Activated CD4-positive, alpha-beta T cell treated with anti-CD3 and anti-CD28 coated beads, Interleukin-2, amount 10 ng/mL, durations not matched to agents 24 days and 14 days (primary cell): ENCODE measurements at regions of chr20 and their contacts with region 1.

Region 1: GRCh38 chr20:9978397-9979004 is 56.3 kb upstream of the ANKEF1 start:
- DNase-seq: peak; percentile 84
- H3K4me3 Mint-ChIP-seq: no peak overlapping the region
- H3K27ac Mint-ChIP-seq: no peak overlapping the region
- H3K4me1 Mint-ChIP-seq: peaks cover 5% of the 10 kb centered on the region
- H3K27me3 Mint-ChIP-seq: peaks cover 5% of the 10 kb centered on the region

Region 2: DNA sequence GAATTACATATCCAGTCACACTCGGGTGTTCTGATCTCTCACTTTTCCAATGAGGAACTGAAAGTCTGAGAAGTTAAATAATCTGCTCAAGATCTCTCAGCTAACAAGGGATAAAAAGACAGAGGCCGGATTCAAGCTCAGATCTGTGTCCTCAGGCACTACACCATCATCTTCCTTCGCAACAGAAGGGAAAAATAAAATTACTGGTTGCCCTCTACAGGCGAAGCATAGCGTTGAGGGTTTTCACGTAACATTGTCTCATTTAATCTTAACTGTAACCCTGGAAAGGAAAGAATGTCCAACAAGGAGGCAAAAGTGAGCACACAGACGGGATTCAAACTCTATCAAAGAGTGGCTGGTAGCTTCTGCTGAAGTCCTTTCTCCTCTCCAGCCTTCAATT is 11.5 kb before region 1 on chr20:
- intact Hi-C with region 1: no loop called
- DNase-seq: no peak
- H3K4me3 Mint-ChIP-seq: no peak overlapping the region
- H3K27ac Mint-ChIP-seq: no peak overlapping the region
- H3K4me1 Mint-ChIP-seq: no peaks in the 10 kb centered on the region
- H3K27me3 Mint-ChIP-seq: peaks cover 6% of the 10 kb centered on the region

Region 3: DNA sequence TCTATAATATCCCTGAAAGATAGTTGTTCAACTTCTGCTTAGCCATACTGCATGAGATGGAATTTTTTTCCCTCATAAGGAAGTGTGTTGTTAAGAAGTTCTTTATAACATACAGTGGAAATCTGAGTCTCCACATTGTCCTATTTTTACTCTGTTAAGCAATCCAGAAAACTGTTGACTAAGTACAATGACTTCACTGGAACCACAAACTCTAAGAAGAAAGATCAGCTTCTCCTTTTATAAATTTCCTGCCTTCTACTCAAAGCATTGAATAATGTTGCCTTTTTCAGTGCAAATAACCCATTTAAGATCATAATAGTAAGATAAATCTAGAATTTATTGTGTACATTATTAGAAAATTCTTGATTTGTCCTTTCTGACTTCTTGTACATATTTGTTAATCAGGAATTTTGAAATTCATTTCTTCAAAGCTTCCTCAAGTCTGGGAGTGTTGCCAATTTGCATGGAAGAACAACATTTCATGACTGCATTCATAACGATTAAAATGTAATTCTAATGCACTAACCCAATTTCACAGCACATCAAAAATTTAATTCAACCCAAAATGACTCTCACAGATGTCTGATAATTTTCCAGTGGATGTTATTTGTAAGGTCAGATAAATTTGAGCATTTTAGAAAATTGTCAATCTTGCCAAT is 10.7 kb after region 1 on chr20:
- intact Hi-C with region 1: no loop called
- DNase-seq: no peak
- H3K4me3 Mint-ChIP-seq: no peak overlapping the region
- H3K27ac Mint-ChIP-seq: no peak overlapping the region
- H3K4me1 Mint-ChIP-seq: no peaks in the 10 kb centered on the region
- H3K27me3 Mint-ChIP-seq: peaks cover 3% of the 10 kb centered on the region

Region 4: DNA sequence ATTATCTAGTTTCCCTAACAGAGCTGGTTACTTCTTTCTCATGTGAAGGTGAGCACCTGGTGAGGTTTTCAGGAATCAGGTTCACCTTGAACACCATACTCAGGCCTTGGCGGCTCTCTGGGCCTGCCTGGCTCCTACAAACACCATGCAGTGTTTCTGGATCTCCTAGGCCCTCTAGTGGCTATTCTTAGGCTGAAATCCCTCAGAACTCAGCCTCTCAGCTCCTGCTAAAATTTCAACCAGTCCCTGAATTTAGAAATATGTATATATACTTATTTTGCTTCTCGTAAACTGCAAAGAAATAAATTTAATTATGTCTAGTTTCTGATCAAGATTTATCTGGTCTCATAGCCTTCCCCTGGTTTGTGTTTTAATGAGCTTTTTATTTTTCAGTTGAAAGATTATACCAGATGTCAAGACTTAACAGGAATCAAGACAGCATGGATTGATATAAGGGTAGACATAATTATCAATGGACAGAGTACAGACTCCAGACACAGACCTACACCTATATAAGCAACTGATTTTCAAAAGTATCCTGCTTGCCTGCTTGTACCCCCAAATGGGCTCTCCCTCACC is 112.2 kb after region 1 on chr20:
- intact Hi-C with region 1: loop called (anchors 1 kb)
- DNase-seq: peak; percentile 67
- H3K4me3 Mint-ChIP-seq: no peak overlapping the region
- H3K27ac Mint-ChIP-seq: no peak overlapping the region
- H3K4me1 Mint-ChIP-seq: no peaks in the 10 kb centered on the region
- H3K27me3 Mint-ChIP-seq: no peaks in the 10 kb centered on the region

Region 5: GRCh38 chr20:10219452-10219791 is 240.9 kb after region 1 on chr20:
- intact Hi-C with region 1: loop called (anchors 2 kb)
- DNase-seq: peak; percentile 93
- H3K4me3 Mint-ChIP-seq: peak overlapping the region; percentile 66
- H3K27ac Mint-ChIP-seq: peak overlapping the region; percentile 40
- H3K4me1 Mint-ChIP-seq: peaks cover 15% of the 10 kb centered on the region
- H3K27me3 Mint-ChIP-seq: peaks cover 22% of the 10 kb centered on the region

Region 6: DNA sequence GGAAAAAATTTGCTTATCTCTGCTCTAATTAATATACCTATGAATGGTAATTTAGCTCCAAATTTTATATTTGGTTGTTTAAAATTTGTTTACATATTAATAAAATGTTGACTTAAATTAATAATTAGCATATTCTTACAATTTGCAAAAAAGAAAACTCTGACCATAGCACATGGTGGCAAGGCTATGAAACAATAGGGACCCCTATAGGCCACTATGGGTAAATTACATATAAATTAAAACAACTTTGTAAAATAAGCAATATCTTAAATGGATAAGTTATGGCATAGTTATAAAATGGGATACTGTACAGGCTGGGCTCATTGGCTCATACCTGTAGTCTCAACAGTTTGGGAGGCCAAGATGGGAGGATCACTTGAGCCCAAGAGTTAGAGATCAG is 379.5 kb after region 1 on chr20:
- intact Hi-C with region 1: loop called (anchors 10 kb)
- DNase-seq: no peak
- H3K4me3 Mint-ChIP-seq: no peak overlapping the region
- H3K27ac Mint-ChIP-seq: no peak overlapping the region
- H3K4me1 Mint-ChIP-seq: peaks cover 4% of the 10 kb centered on the region
- H3K27me3 Mint-ChIP-seq: peaks cover 8% of the 10 kb centered on the region

Region 7: GRCh38 chr20:10427060-10427692 is 448.7 kb after region 1 on chr20:
- intact Hi-C with region 1: loop called (anchors 1 kb)
- DNase-seq: peak; percentile 79
- H3K4me3 Mint-ChIP-seq: no peak overlapping the region
- H3K27ac Mint-ChIP-seq: no peak overlapping the region
- H3K4me1 Mint-ChIP-seq: peaks cover 21% of the 10 kb centered on the region
- H3K27me3 Mint-ChIP-seq: no peaks in the 10 kb centered on the region

Region 8: DNA sequence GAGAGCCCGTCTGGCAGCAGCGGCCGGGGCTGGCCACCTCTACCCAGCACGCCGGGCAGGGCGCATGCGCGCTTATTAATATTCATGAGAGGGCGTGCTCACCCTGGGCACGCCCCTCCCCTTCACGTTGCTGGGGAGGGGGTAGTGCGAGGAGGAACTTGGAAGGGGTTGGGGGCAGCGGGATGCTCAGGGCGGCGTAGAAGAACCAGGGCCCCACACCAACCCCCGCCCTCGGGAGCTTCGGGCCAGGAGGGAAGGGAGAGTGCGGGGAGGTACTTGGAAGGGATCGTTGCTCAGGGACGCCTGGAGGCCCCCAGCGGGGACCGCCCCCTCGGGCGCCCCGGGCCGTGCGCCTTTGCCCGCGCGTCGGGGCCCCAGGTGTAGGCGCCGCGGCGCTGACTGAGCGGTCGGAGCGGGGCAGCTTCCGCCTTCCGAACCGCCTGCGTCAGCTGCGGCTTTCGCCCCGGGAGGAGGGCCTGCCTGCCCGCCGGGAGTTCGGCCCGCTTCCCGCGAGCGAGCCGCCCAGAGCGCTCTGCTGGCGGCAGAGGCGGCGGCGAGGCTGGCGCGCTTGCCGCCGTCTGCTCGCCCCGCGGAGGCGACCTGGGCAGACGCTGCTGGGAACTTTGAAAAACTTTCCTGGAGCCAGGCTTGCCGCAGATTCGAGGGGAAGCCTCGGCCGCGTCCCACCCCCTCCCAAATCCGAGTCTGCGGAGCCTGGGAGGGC is 695.6 kb after region 1 on chr20 and contains the start of gene JAG1:
- intact Hi-C with region 1: loop called (anchors 10 kb)
- DNase-seq: peak; percentile 93
- H3K4me3 Mint-ChIP-seq: peak within 1 kb of the TSS; percentile 93
- H3K27ac Mint-ChIP-seq: peak within 1 kb of the TSS; percentile 88
- H3K4me1 Mint-ChIP-seq: peaks cover 30% of the 10 kb centered on the region
- H3K27me3 Mint-ChIP-seq: peaks cover 67% of the 10 kb centered on the region
- total RNA-seq, gene JAG1: 1.1 and 1.3 TPM in 2 replicates

Region 9: DNA sequence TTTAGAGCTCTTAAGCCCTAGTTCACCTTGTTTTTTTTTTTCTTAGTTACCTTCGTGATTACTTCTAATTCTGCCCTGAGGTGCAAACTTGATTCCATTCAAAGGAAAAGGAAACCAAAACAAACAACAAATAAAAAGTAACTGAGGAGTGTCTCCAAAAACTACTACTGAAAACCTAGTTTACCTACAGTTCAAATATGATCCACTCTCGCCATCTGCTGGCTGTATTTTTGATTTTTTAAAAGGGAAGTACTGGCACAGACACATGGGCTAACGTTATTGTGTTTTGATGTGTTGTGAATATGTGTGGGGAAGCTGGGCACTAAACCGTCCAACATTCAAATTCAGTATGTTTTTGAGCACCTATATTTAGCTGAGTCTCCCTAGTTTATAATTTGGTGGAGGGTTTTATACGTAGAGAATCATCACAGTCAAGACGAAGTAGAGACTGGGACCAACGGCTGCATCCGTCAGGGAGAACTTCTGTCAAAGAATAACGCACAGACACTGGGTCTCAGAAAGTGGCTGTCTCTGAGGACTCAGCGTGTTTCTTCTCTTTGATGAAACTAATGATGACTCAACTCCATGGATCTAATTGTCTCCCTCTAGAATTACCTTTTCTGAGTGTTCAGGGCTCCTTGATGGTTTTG is 1565.7 kb after region 1 on chr20:
- intact Hi-C with region 1: loop called (anchors 1 kb)
- DNase-seq: peak; percentile 76
- H3K4me3 Mint-ChIP-seq: no peak overlapping the region
- H3K27ac Mint-ChIP-seq: no peak overlapping the region
- H3K4me1 Mint-ChIP-seq: no peaks in the 10 kb centered on the region
- H3K27me3 Mint-ChIP-seq: no peaks in the 10 kb centered on the region